ENCODE measurements at regions of chr10 and their contacts with region 1.

Region 1: GRCh38 chr10:13117841-13118783 is 18.1 kb downstream of the OPTN start:
- DNase-seq: no peak
- H3K4me3 ChIP-seq: no peak overlapping the region
- H3K27ac ChIP-seq: no peak overlapping the region
- H3K4me1 ChIP-seq: no peaks in the 10 kb centered on the region
- H3K27me3 ChIP-seq: no peaks in the 10 kb centered on the region
- CTCF ChIP-seq: no peak
- POLR2A ChIP-seq: no peak

Region 2: DNA sequence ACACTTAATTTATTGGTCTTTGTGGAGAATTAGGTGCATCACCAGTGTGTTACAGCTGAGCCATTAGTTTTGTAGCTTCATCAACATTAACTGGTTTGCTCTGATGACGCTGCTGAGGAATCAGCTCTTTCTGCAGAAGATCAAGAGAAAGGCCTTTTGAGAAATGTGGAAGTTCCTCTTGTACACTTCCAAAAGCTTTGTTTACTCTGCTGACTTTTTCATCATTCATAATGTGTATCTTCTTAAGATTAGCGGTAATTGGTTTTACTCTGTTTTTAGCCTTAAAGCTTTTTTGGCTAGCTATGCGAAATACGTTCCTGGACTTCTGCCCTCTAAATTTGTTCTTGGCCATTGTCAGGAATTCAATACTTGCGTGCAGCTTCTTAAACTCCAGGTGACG is 190.0 kb after region 1 on chr10:
- CTCF ChIA-PET with region 1: no interaction called
- POLR2A ChIA-PET with region 1: interaction called, 11 read pairs
- dilution Hi-C with region 1: no loop called
- intact Hi-C with region 1: no loop called
- DNase-seq: no peak
- H3K4me3 ChIP-seq: no peak overlapping the region
- H3K27ac ChIP-seq: no peak overlapping the region
- H3K4me1 ChIP-seq: no peaks in the 10 kb centered on the region
- H3K27me3 ChIP-seq: no peaks in the 10 kb centered on the region
- CTCF ChIP-seq: no peak
- POLR2A ChIP-seq: no peak

Measured in endothelial cell of umbilical vein (primary cell).